Right lobe of liver (tissue), 6 donors: ENCODE measurements at regions of chr14 and their contacts with region 1.

Region 1: DNA sequence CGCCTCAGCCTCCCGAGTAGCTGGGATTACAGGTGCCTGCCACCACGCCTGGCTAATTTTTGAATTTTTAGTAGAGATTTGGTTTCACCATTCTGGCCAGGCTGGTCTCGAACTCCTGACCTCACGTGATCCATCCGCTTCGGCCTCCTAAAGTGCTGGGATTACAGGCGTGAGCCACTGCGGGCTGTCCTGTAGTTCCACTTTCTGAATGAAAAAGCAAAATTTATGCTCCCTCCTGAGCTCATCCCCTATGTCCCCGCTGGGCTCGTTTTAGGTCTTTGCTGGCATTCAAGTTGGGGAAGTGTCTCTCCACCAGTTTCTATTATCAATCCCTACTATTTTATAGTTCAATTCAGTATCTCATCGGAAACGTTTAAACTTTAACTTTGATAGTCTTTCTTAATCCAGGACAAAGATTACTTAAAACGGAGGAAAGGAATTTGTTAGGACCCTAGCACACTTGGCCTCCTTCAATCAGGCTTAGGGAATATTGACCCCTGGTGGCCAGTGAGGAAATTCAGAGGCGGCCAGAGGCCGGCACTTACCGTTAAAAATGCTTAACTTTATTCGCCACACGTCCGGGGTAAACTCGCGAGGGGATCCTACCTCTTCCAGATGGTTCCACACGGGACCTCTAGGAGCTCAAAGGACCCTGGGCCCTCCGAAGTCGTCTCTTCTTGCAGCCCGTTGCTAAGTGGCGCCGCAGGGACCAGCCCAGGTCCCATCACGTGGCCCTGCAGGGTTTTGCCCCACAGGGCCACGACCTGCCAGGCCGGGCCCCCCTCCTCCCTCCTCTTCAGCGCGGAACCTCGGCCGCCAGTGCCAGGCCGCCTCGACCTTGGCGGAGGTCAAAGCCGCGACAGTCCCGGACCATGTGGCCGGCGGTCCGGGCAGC is 11.4 kb upstream of the DNAL1 start:
- DNase-seq: peak; percentile 80 to 89 (median 87)
- ATAC-seq: peak; percentile 88 to 94 (median 90)
- H3K4me3 ChIP-seq: peak overlapping the region; percentile 52 to 64 (median 62)
- H3K27ac ChIP-seq: peak overlapping the region; percentile 47 to 86 (median 70)
- H3K4me1 ChIP-seq: peaks cover 0 to 14% (median 0%) of the 10 kb centered on the region in 4 donors
- H3K27me3 ChIP-seq: no peaks in the 10 kb centered on the region
- CTCF ChIP-seq: peak; percentile 85 to 93 (median 87)
- POLR2A ChIP-seq: peak; percentile 15

Region 2: GRCh38 chr14:73526569-73526968 is 106.8 kb before region 1 on chr14:
- intact Hi-C with region 1: loop called in 1 of 2 experiments (anchors 10 kb)
- DNase-seq: peak; percentile 79 to 96 (median 90)
- ATAC-seq: peak; percentile 93 to 98 (median 95)
- H3K4me3 ChIP-seq: no peak overlapping the region
- H3K27ac ChIP-seq: peak overlapping the region; percentile 57 to 84 (median 62)
- H3K4me1 ChIP-seq: peaks cover 0 to 16% (median 8%) of the 10 kb centered on the region in 4 donors
- H3K27me3 ChIP-seq: no peaks in the 10 kb centered on the region
- CTCF ChIP-seq: peak in 1 of 4 donors; percentile 28
- POLR2A ChIP-seq: no peak

Region 3: DNA sequence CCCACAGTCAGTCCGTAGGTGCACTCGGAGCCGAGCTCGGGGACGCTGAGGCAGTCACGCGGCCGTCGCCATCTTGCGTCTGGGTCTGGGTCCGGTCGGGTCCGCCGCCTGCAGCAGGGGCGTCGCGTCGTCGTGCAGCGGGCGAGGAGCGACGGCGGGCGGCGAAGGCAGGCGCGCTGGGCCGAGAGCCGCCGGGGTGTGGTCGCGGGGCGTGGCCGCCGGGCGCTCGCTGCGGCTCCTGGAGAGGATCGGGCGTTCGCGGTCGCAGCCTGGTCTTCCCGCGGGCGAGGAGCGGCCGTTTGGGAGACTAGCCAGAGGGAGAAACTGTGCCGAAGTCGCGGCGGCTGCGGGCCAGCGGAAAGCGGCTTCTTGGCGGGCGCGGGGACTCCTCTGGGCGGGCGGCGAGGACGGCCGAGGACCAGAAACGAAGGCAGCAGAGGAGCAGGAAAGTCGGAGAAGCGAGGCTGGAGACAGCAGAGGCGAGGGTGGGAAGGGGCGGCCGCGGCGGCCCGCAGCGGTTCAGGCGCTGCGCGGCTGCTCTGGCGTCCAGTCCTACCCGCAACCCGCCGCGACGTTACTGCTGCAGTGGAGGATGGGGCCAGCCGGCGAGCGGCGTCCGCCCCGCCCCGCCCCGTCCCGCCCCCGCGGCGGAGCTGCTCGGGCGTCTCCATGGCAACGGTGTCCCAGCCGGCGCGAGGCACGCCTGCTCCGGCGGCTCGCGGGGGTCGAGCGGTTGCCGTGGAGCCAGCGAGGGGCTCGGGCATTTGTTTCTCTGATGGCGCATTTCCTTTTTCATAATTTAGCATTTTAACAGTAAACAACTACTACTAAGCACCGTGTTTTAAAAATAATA is 80.7 kb after region 1 on chr14 and contains the start of gene PNMA1:
- intact Hi-C with region 1: loop called in 1 of 2 experiments (anchors 10 kb)
- DNase-seq: peak; percentile 88 to 93 (median 90)
- ATAC-seq: peak; percentile 88 to 94 (median 90)
- H3K4me3 ChIP-seq: peak within 1 kb of the TSS; percentile 65 to 80 (median 78)
- H3K27ac ChIP-seq: peak within 1 kb of the TSS; percentile 30 to 76 (median 72)
- H3K4me1 ChIP-seq: peaks cover 0 to 7% (median 0%) of the 10 kb centered on the region in 4 donors
- H3K27me3 ChIP-seq: no peaks in the 10 kb centered on the region
- CTCF ChIP-seq: no peak
- POLR2A ChIP-seq: peak; percentile 73
- total RNA-seq, gene PNMA1: 1.7 to 7.6 (median 3.7) TPM

Region 4: GRCh38 chr14:73741386-73741875 is 108.1 kb after region 1 on chr14:
- intact Hi-C with region 1: no loop called
- DNase-seq: peak; percentile 72 to 78 (median 74)
- ATAC-seq: peak; percentile 58 to 77 (median 64)
- H3K4me3 ChIP-seq: peak overlapping the region in 1 of 3 donors; percentile 25
- H3K27ac ChIP-seq: peak overlapping the region; percentile 58 to 72 (median 61)
- H3K4me1 ChIP-seq: peaks cover 2 to 64% (median 41%) of the 10 kb centered on the region in 4 donors
- H3K27me3 ChIP-seq: no peaks in the 10 kb centered on the region
- CTCF ChIP-seq: no peak
- POLR2A ChIP-seq: peak; percentile 1